Activated T-helper 1 cell treated with anti-CD3 and anti-CD28 coated beads, Interleukin-12 subunit alpha, Interleukin-12 subunit beta, Interleukin-2, Interleukin-4 antibody, amounts not matched to agents 30 ng/mL and 10 ng/mL and 1 ng/mL, durations not matched to agents 14 hours and 24 hours and 36 hours (primary cell): ENCODE measurements at regions of chr10 and their contacts with region 1.

Region 1: GRCh38 chr10:6239213-6239991 is 36.7 kb downstream of the PFKFB3 start:
- DNase-seq: peak; percentile 54
- H3K4me3 Mint-ChIP-seq: no peak overlapping the region
- H3K27ac Mint-ChIP-seq: peak overlapping the region; percentile 50
- H3K4me1 Mint-ChIP-seq: peaks cover 24% of the 10 kb centered on the region
- H3K27me3 Mint-ChIP-seq: no peaks in the 10 kb centered on the region

Region 2: GRCh38 chr10:6300106-6300783 is 60.8 kb after region 1 on chr10:
- intact Hi-C with region 1: loop called (anchors 2 kb)
- DNase-seq: no peak
- H3K4me3 Mint-ChIP-seq: peak overlapping the region; percentile 6
- H3K27ac Mint-ChIP-seq: peak overlapping the region; percentile 56
- H3K4me1 Mint-ChIP-seq: peaks cover 60% of the 10 kb centered on the region
- H3K27me3 Mint-ChIP-seq: no peaks in the 10 kb centered on the region